CD4-positive, alpha-beta T cell (primary cell): ENCODE measurements at regions of chr3 and their contacts with region 1.

Region 1: GRCh38 chr3:23888617-23889228 is 28.1 kb downstream of the NKIRAS1 start:
- DNase-seq: peak in 4 of 14 experiments; percentile 21 to 68 (median 51)
- ATAC-seq: peak; percentile 51
- H3K4me3 ChIP-seq: no peak overlapping the region
- H3K4me3 Mint-ChIP-seq: no peak overlapping the region
- H3K27ac ChIP-seq: no peak overlapping the region
- H3K27ac Mint-ChIP-seq: peak overlapping the region; percentile 32
- H3K4me1 ChIP-seq: no peaks in the 10 kb centered on the region
- H3K4me1 Mint-ChIP-seq: no peaks in the 10 kb centered on the region
- H3K27me3 ChIP-seq: no peaks in the 10 kb centered on the region
- H3K27me3 Mint-ChIP-seq: no peaks in the 10 kb centered on the region
- CTCF ChIP-seq: peak; percentile 88

Region 2: GRCh38 chr3:23999012-23999641 is 110.4 kb after region 1 on chr3:
- CTCF ChIA-PET with region 1: interaction called, 3 read pairs
- POLR2A ChIA-PET with region 1: no interaction called
- intact Hi-C with region 1: loop called in 1 of 2 experiments (anchors 1 kb)
- DNase-seq: peak; percentile 21 to 64 (median 49)
- ATAC-seq: peak; percentile 43
- H3K4me3 ChIP-seq: no peak overlapping the region
- H3K4me3 Mint-ChIP-seq: no peak overlapping the region
- H3K27ac ChIP-seq: no peak overlapping the region
- H3K27ac Mint-ChIP-seq: no peak overlapping the region
- H3K4me1 ChIP-seq: no peaks in the 10 kb centered on the region
- H3K4me1 Mint-ChIP-seq: no peaks in the 10 kb centered on the region
- H3K27me3 ChIP-seq: no peaks in the 10 kb centered on the region
- H3K27me3 Mint-ChIP-seq: no peaks in the 10 kb centered on the region
- CTCF ChIP-seq: peak; percentile 85

Region 3: DNA sequence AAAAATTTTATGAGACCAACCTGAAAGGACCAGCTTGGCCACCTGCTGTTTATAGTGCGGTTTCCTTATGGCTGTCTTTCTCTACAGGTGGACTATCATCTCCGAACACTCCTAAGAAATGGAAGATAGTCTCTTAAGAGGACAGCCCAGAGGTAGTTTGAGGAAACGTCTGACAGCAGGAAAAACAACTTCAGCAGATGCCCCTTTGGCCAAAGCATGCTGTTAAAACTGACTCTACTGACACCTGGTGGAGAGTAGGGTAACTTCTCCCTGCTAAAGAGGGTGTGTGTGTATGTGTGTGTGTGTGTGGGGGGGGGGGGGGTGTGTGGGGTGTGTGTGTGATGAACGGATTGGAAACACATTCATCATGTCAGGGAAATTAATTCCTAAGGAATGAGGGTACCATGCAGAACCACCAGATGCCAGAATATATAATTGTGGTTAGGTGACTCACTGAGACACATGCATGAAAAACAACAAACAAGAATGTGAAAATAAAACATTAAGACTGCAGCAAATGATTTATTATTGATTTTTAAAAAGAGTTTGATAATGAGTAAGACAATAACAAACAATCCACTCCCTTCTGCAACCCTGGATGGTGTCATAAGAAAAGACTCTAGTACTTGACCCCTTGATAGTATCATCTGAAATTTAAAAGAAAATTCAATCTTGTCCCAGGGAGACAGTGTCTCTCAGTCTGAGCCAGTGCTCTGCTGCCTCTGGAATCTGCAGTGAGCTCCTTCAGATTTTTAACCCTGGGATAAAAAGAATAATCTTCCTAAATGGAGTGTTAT is 349.4 kb after region 1 on chr3:
- CTCF ChIA-PET with region 1: interaction called, 3 read pairs
- POLR2A ChIA-PET with region 1: no interaction called
- intact Hi-C with region 1: loop called in 1 of 2 experiments (anchors 2 kb)
- DNase-seq: peak in 7 of 14 experiments; percentile 4 to 70 (median 17)
- ATAC-seq: peak; percentile 61
- H3K4me3 ChIP-seq: no peak overlapping the region
- H3K4me3 Mint-ChIP-seq: no peak overlapping the region
- H3K27ac ChIP-seq: no peak overlapping the region
- H3K27ac Mint-ChIP-seq: no peak overlapping the region
- H3K4me1 ChIP-seq: no peaks in the 10 kb centered on the region
- H3K4me1 Mint-ChIP-seq: no peaks in the 10 kb centered on the region
- H3K27me3 ChIP-seq: no peaks in the 10 kb centered on the region
- H3K27me3 Mint-ChIP-seq: no peaks in the 10 kb centered on the region
- CTCF ChIP-seq: peak; percentile 45